A549 (cell line): ENCODE measurements at regions of chr7 and their contacts with region 1.

Region 1: GRCh38 chr7:137656227-137656849 is 190.4 kb downstream of the DGKI start:
- DNase-seq: peak; percentile 59 to 69
- ATAC-seq: peak; percentile 83 to 92; a peak in 4 of 6 replicates
- H3K4me3 ChIP-seq: no peak overlapping the region
- H3K27ac ChIP-seq: no peak overlapping the region
- H3K4me1 ChIP-seq: no peaks in the 10 kb centered on the region
- CTCF ChIP-seq: peak; percentile 87
- EP300 ChIP-seq: no peak
- POLR2A ChIP-seq: no peak
- RAD21 ChIP-seq: peak; percentile 85

Region 2: GRCh38 chr7:137606061-137606674 is 50.2 kb before region 1 on chr7:
- CTCF ChIA-PET with region 1: interaction called, 12 read pairs
- POLR2A ChIA-PET with region 1: no interaction called
- DNase-seq: peak; percentile 14 to 52
- ATAC-seq: peak in 1 of 2 experiments; percentile 54; a peak in 2 of 6 replicates
- H3K4me3 ChIP-seq: no peak overlapping the region
- H3K27ac ChIP-seq: no peak overlapping the region
- H3K4me1 ChIP-seq: no peaks in the 10 kb centered on the region
- CTCF ChIP-seq: peak; percentile 53
- EP300 ChIP-seq: no peak
- POLR2A ChIP-seq: no peak
- RAD21 ChIP-seq: peak; percentile 45 to 70

Region 3: DNA sequence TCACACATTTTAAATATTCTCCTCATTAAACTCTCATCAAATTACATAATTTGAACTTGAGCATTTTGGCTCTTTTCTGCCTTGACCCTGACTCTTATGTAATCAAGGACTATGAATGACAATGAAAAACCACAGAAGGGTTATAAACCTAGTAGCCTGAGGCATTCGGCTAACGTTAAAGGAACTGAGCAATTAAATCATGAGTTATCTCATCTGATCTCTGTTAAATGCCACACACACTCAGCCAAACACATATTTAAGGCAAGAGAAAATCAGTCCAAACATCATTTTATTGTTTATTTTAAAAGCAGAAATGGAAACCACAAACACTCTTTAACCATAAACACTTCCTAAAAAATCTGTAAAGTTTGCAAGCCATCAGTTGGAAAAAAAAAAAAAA is 13.9 kb before region 1 on chr7:
- CTCF ChIA-PET with region 1: interaction called, 16 read pairs
- POLR2A ChIA-PET with region 1: no interaction called
- DNase-seq: no peak
- ATAC-seq: no peak
- H3K4me3 ChIP-seq: no peak overlapping the region
- H3K27ac ChIP-seq: no peak overlapping the region
- H3K4me1 ChIP-seq: no peaks in the 10 kb centered on the region
- CTCF ChIP-seq: no peak
- EP300 ChIP-seq: no peak
- POLR2A ChIP-seq: no peak
- RAD21 ChIP-seq: no peak

Region 4: DNA sequence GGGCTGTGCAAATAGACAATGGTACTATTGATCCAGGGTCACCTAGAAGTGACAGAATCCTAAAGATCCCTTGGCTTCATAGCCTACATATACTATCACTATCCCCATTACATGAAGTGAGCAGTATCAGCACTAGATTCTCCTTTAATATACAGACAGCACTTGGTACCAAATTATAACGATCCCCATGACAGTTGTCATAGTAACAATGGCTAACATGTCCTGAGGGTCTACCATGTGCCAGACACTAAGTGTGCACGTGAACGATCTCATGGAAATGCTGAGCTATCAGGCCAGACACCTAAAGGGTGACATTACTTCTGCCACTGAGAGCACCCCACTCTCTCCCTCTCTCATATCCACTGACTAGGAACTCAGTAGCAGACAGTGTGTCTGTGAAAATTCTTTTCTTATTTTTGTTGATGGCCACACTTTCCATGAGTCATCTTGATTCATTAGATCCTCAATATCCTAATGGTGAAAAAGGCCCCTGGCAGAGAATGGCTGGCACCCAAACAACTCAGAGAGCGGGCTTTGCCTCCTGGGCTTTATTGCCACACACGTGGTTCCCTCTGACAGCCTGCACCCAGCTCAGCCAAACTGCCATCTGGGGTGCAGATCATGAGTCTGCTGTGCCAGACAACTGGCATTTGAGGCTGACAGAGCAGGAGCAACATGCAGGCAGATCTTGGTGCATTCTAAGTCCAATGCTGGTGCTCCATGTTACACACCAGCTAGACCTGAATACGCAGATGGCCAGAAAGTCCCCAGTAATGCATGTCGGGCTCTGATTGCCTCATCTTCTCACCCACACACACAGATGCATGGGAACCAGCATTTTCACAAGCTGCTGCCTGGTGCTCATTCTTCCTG is 14.1 kb after region 1 on chr7:
- CTCF ChIA-PET with region 1: interaction called, 36 read pairs
- POLR2A ChIA-PET with region 1: no interaction called
- DNase-seq: no peak
- ATAC-seq: no peak
- H3K4me3 ChIP-seq: no peak overlapping the region
- H3K27ac ChIP-seq: no peak overlapping the region
- H3K4me1 ChIP-seq: peaks cover 12% of the 10 kb centered on the region
- CTCF ChIP-seq: no peak
- EP300 ChIP-seq: no peak
- POLR2A ChIP-seq: no peak
- RAD21 ChIP-seq: no peak

Region 5: DNA sequence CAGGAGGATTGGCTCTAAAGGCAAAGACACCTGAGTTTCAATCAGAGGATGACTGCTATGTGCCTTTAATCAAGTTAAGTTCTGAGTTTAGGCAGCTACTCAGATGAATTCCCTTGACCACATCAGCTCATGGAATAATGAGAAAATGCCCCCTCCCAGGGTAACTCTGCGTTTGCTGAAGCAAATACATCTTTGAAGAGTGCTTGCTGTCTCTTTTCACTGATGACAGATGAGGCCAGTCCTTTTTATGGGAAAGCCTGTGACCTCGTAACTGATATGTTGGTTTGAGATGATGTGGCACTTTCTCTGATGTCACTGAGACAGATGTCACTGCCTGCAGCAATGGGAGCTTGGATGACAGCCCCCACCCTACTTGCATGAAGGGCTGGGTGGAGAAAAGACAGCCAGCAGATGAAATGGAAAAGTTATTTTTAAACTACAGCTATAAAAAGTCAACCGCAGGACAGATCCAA is 234.1 kb after region 1 on chr7:
- CTCF ChIA-PET with region 1: interaction called, 16 read pairs
- POLR2A ChIA-PET with region 1: no interaction called
- DNase-seq: no peak
- ATAC-seq: no peak
- H3K4me3 ChIP-seq: no peak overlapping the region
- H3K27ac ChIP-seq: no peak overlapping the region
- H3K4me1 ChIP-seq: peaks cover 11% of the 10 kb centered on the region
- CTCF ChIP-seq: no peak
- EP300 ChIP-seq: no peak
- POLR2A ChIP-seq: no peak
- RAD21 ChIP-seq: no peak

Region 6: GRCh38 chr7:137908069-137908468 is 251.7 kb after region 1 on chr7:
- CTCF ChIA-PET with region 1: interaction called, 111 read pairs
- POLR2A ChIA-PET with region 1: no interaction called
- DNase-seq: no peak
- ATAC-seq: no peak
- H3K4me3 ChIP-seq: no peak overlapping the region
- H3K27ac ChIP-seq: no peak overlapping the region
- H3K4me1 ChIP-seq: 0 out of 3 replicates have a peak, but pooled peaks cover 3% of the 10 kb centered on the region
- CTCF ChIP-seq: no peak
- EP300 ChIP-seq: no peak
- POLR2A ChIP-seq: no peak
- RAD21 ChIP-seq: no peak

Region 7: DNA sequence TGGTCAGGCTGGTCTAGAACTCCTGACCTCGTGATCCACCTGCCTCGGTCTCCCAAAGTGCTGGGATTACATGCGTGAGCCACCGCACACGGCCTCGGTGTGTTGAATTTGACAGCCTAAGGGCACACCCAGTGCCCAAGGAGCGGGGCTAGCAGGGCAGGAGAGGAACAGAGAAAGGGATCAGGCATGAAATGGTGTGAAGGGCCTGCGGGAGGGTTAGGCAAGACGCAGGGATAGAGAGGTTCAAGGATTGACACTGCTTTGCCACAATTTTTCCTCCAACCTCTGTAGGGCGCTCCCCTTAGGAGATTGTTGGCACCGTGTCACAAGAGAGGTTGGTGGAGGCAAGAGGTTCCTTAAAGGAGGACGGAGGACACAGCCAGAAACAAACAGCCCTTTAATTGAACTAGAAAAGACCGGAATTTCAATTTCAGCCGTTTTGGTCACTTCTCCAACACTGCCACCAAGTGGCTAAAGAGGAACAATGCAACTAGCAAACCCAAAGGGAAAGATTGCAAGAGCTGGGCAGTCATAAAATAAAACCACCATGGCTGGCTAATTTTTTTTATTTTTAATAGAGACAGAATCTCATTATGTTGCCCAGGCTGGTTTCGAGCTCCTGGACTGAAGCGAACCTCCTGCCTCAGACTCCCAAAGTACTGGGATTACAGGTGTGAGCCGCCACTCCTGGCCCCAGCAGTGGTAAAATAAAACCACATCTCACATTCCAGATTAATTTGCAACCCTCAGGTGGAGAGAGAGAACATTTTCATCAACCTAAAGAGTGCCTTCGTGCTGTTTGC is 352.4 kb after region 1 on chr7:
- CTCF ChIA-PET with region 1: interaction called, 23 read pairs
- POLR2A ChIA-PET with region 1: no interaction called
- DNase-seq: peak; percentile 36 to 58
- ATAC-seq: peak; percentile 80 to 81
- H3K4me3 ChIP-seq: no peak overlapping the region
- H3K27ac ChIP-seq: peak overlapping the region; percentile 60 to 71; a peak in 5 of 6 replicates
- H3K4me1 ChIP-seq: no peaks in the 10 kb centered on the region
- CTCF ChIP-seq: peak; percentile 92
- EP300 ChIP-seq: no peak
- POLR2A ChIP-seq: no peak
- RAD21 ChIP-seq: peak; percentile 93 to 96